Right cardiac atrium (tissue), 5 donors: ENCODE measurements at regions of chr14 and their contacts with region 1.

Region 1: DNA sequence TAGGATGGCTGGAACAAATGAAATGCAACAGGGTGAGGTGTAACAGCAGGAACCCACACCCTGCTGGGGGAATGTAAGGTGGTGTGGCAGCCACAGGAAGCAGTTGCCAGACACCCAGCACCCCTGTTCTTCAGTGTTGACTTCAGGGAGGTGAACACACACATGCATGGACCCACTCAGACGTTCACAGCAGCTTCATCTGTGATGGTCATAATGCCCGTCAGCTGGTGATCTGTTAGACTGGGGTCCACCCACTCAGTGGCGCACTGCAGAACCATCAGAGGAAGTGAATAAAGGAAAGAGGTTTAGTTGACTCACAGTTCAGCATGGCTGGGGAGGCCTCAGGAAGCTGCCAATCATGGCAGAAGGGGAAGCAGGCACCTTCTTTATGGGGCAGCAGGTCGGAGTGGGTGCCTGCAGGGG is 22.7 kb upstream of the TEX22 start:
- DNase-seq: peak in 1 of 3 donors; percentile 19
- ATAC-seq: no peak
- H3K4me3 ChIP-seq: no peak overlapping the region
- H3K27ac ChIP-seq: no peak overlapping the region
- H3K4me1 ChIP-seq: no peaks in the 10 kb centered on the region
- H3K27me3 ChIP-seq: no peaks in the 10 kb centered on the region

Region 2: GRCh38 chr14:105448706-105449111 is 73.1 kb after region 1 on chr14:
- intact Hi-C with region 1: loop called in 2 of 4 experiments (anchors 5 kb)
- DNase-seq: peak; percentile 77 to 93 (median 93)
- ATAC-seq: peak; percentile 87 to 88
- H3K4me3 ChIP-seq: no peak overlapping the region
- H3K27ac ChIP-seq: no peak overlapping the region
- H3K4me1 ChIP-seq: no peaks in the 10 kb centered on the region
- H3K27me3 ChIP-seq: no peaks in the 10 kb centered on the region

Region 3: DNA sequence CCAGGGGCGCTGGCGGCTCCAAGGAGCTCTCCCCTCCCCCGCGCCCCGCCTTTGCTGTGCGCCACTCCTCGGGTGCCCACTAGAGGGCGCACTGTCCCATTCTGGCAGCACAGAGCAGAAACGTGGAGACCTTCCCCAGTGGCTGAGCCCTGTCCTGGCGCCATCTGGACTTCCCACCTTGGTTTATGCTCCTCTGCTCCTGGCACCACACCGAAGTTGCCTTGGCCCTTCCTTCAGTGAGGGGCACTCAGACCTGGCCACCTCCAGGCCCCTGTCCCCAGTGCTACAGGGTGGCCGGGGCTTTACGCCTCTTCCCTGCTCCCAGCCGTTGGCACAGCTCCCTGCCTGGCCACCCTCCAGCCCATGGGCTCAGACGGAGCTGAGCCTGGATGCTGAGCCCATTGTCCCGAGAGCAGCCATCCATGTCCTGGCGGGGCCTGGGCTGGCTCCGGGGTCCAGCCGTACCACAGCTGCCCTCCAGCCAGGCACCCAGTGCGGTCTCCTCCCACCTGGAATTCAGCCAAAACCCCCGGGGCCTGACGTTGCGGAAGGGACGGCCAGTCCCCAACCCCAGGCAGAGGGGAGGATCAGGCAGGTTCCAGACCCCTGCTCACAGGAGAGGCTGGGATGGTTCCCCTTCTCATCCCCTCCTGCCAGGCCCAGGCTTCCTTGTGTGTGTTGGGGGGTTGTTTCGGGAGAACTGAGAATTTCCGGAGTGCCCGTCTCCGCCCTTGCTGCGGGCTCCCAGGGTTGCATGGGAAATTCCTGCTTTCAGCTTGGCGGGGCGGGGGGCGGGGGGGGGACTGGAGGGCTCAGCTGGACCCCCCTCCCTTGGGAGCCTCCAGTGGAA is 105.5 kb after region 1 on chr14:
- intact Hi-C with region 1: loop called in 2 of 4 experiments (anchors 5 to 10 kb)
- DNase-seq: peak; percentile 89 to 96 (median 96)
- ATAC-seq: peak; percentile 61 to 66
- H3K4me3 ChIP-seq: peak overlapping the region; percentile 5
- H3K27ac ChIP-seq: peak overlapping the region; percentile 95
- H3K4me1 ChIP-seq: peaks cover 20% of the 10 kb centered on the region
- H3K27me3 ChIP-seq: no peaks in the 10 kb centered on the region

Region 4: GRCh38 chr14:105490572-105491366 is 115.1 kb after region 1 on chr14 and contains the start of gene TEDC1:
- intact Hi-C with region 1: loop called (anchors 2 to 10 kb)
- DNase-seq: peak; percentile 100
- ATAC-seq: peak; percentile 84 to 87
- H3K4me3 ChIP-seq: peak within 1 kb of the TSS; percentile 61
- H3K27ac ChIP-seq: peak within 1 kb of the TSS; percentile 72
- H3K4me1 ChIP-seq: peaks cover 5% of the 10 kb centered on the region
- H3K27me3 ChIP-seq: no peaks in the 10 kb centered on the region
- total RNA-seq, gene TEDC1: 5.2 to 6.9 (median 5.8) TPM

Region 5: DNA sequence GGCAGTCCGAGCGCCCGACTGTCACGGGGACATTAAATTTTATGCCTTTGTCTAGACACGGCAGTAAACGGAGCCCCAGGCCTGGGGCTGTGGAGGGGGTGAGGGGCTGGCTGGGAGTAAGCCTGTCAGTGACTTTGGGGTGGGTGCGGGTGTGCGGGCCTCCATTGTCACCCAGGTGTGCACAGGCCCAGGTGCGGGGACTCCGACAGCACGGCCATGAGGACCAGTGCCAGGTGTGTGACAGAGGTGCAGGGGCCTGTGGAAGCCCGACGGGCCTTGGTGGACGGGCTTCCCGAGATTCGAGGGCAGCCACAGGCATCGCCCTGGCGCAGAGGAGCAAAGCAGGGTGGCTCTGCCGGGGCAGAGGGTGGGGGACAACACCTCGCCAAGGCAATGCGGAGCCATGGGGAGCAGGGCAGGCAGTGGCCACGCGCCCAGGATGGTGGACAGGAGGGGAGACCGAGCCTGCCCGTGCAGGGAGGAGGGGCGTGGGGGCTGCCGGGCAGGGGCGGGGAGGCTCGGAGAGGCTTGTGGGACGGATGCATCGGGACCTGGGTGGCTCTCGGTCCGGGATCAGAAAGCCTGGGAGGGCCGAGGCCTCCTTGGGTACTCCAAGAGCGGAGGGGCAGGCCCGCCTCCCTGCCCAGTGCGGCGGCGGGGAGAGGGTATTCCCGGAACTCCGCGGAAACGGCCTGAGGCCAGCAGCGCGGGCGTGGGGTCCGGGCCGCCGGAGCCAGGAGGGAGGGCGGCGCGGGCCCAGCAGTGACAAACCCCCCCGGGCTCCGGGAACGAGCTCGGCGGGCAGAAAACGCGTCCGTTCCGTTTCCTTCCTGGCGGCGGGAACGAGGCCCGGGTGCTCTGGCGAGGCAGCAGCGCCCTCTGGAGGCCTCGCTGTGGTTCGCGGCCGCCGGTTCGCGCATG is 152.3 kb after region 1 on chr14:
- intact Hi-C with region 1: loop called in 3 of 4 experiments (anchors 2 to 10 kb)
- DNase-seq: peak; percentile 81 to 95 (median 93)
- ATAC-seq: peak; percentile 71 to 72
- H3K4me3 ChIP-seq: peak overlapping the region; percentile 52
- H3K27ac ChIP-seq: no peak overlapping the region
- H3K4me1 ChIP-seq: no peaks in the 10 kb centered on the region
- H3K27me3 ChIP-seq: no peaks in the 10 kb centered on the region